Left cardiac atrium (tissue), 4 donors: ENCODE measurements at regions of chr4 and their contacts with region 1.

Region 1: DNA sequence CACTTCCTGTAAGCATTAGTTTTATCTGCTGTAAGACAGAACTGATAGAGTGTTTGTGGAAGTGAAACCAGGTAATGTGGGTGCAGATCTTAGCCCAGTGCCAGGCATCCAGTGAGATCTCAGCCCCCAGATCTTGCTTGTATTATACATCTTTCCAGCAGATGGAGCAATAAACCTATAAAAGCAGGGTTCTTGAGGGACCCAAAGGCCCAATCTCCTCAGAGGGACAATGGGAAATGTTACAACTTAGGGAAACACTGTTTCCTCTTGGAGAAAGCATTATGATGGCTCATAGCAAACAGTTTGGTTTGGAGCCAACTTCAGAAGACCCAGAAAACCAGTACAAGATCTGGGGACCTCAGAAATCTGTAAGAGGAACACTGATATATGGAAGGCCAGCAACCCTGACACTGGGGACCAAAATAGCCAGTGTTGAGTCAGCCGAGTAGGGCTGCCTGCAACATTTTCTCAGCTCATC is 206.3 kb downstream of the SLC7A11 start:
- DNase-seq: no peak
- ATAC-seq: peak; percentile 88 to 90

Region 2: GRCh38 chr4:138050601-138051000 is 14.8 kb after region 1 on chr4:
- intact Hi-C with region 1: no loop called
- DNase-seq: no peak
- ATAC-seq: no peak

Region 3: GRCh38 chr4:138090150-138090917 is 54.5 kb after region 1 on chr4:
- intact Hi-C with region 1: loop called (anchors 1 to 10 kb)
- DNase-seq: no peak
- ATAC-seq: peak; percentile 67 to 87

Region 4: GRCh38 chr4:138182838-138183426 is 147.1 kb after region 1 on chr4:
- intact Hi-C with region 1: loop called (anchors 5 to 10 kb)
- DNase-seq: no peak
- ATAC-seq: peak; percentile 49 to 53

Region 5: DNA sequence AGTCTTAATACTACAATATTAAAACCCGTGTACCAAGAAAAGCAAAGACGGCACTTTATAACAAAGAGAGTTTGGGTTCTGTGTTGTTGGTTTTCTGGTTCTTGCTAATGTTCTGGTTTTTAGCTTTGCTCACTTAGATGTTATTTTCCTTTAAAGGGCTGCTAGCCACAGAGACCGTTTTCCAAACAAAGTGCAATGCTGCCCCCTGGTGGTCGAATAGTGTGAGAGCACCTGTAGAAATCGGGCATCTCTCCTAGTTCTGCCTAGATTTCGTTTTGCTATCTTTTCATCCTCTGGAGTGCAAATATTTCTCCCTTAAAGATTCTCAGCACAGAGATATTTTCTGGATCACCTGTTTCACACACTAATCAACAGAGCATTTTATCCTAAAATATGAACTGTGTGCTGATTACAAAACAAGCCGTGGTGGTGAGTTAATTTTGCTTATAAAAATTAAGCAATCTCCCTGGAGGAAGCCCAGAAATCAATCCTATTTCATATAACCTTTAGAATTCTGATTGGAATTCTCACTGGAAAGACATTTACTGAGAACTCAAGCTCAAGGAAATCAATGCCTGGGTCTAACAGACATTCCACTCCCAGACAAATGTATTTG is 645.3 kb after region 1 on chr4:
- intact Hi-C with region 1: loop called in 1 of 2 experiments (anchors 2 kb)
- DNase-seq: peak; percentile 84
- ATAC-seq: peak; percentile 68 to 72

Region 6: DNA sequence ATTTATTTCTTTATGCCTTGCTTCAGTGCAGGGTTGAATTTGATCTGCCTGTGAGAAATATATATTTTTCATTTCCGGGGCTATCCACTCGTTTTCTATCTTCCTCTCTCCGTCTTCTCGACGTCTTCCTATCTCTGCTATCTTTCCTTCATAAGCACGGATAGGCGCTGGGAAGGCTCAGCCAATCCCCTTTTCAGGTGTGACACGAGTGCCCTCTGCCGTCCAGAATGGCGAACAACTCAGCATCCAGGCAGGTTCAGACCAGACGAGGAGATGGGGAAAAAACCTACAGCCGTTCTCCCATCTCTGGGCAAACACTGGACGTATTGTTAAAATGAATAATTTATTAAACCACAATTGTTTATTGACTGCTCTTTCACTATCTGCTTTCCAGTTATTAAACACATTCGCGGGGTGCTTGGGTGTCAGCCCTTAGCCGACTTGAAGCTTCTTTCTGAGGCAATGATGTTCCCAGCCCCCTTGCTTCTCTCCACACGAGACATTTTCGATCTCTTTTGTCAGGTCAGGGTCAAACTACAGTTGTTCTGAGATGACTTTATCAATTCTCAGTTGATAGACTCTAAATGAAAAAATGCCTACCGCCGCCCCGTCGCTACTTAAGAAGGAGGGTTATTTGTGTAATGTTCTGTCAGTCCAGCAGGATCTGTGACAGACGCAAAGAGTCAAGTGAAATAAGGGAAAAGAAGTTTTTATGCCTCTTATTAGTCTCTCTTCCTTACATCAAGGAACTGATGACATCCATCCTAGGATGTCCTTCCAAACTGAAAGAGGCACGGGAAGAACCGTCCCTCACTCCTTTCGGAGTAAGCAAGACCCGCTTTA is 883.5 kb after region 1 on chr4:
- intact Hi-C with region 1: loop called in 1 of 2 experiments (anchors 2 kb)
- DNase-seq: peak; percentile 76
- ATAC-seq: peak; percentile 77 to 97